ENCODE measurements at regions of chr10 and their contacts with region 1.

Region 1: DNA sequence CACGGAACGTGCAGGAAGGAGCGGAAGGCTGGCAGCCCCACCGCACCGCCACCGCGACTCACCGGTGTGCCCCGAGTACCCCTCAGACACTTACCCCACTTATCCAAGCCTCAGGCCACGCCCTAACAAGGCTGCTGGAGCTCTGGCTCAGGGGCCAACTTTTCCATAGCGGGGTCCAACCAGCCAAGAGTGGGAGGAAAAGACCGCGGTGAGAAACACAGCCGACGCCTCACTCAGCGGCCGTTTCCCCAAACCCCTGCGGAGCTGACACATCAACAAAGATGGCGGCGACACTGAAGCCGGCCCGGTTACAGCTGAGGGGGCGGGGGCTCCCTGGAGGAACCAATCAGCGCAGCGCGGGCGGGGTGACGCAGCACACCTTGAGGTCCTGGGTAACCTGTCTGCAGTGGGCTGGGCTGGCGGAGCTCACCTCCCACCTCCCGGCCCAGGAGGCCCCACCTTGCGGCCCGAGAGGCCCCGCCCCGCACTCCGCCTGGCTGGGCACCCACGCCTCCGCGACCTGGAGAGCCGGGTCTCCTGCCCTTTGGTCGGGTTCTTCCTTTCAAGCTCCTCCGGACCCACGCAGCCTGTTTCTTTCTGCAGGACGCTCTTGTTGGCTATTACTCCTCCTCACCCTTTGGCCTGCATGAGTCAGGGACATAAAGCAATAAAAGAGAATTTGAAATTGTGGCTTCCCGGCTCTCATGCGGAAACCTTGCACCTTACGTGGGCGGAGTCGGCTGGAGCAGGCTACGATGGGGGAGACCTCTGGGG is at the start of gene CCDC186:
- DNase-seq: peak; percentile 96
- H3K4me3 ChIP-seq: peak within 1 kb of the TSS; percentile 81 to 95 (median 87)
- H3K27ac ChIP-seq: peak within 1 kb of the TSS; percentile 88 to 92 (median 90)
- H3K4me1 ChIP-seq: peaks cover 0 to 28% (median 11%) of the 10 kb centered on the region in 4 donors
- H3K27me3 ChIP-seq: no peaks in the 10 kb centered on the region
- CTCF ChIP-seq: no peak
- EP300 ChIP-seq: no peak
- POLR2A ChIP-seq: peak; percentile 22 to 51
- total RNA-seq, gene CCDC186: 17.6 to 27.1 (median 23.9) TPM

Region 2: GRCh38 chr10:113679463-113680189 is 494.5 kb before region 1 on chr10 and contains the start of gene CASP7:
- intact Hi-C with region 1: loop called (anchors 5 kb)
- DNase-seq: peak; percentile 90
- H3K4me3 ChIP-seq: peak within 1 kb of the TSS; percentile 83 to 99 (median 94)
- H3K27ac ChIP-seq: peak within 1 kb of the TSS; percentile 96 to 98 (median 96)
- H3K4me1 ChIP-seq: peaks cover 2 to 22% (median 17%) of the 10 kb centered on the region in 4 donors
- H3K27me3 ChIP-seq: no peaks in the 10 kb centered on the region
- CTCF ChIP-seq: no peak
- EP300 ChIP-seq: no peak
- POLR2A ChIP-seq: peak; percentile 7 to 44
- total RNA-seq, gene CASP7: 11.4 to 17.8 (median 14.5) TPM